Caco-2 (cell line): ENCODE measurements at regions of chr19 and their contacts with region 1.

Region 1: GRCh38 chr19:55258828-55259539 is at the start of gene PPP6R1:
- DNase-seq: peak; percentile 98 to 99
- H3K4me3 ChIP-seq: peak within 1 kb of the TSS; percentile 85
- H3K4me3 Mint-ChIP-seq: peak within 1 kb of the TSS; percentile 94
- H3K27ac Mint-ChIP-seq: peak within 1 kb of the TSS; percentile 81
- H3K4me1 ChIP-seq: peaks cover 23% of the 10 kb centered on the region; the same call in 1 of the 2 replicates
- H3K4me1 Mint-ChIP-seq: peaks cover 23% of the 10 kb centered on the region
- H3K27me3 ChIP-seq: no peaks in the 10 kb centered on the region
- H3K27me3 Mint-ChIP-seq: no peaks in the 10 kb centered on the region
- CTCF ChIP-seq: no peak
- total RNA-seq, gene PPP6R1: 113 and 118 TPM in 2 replicates

Region 2: DNA sequence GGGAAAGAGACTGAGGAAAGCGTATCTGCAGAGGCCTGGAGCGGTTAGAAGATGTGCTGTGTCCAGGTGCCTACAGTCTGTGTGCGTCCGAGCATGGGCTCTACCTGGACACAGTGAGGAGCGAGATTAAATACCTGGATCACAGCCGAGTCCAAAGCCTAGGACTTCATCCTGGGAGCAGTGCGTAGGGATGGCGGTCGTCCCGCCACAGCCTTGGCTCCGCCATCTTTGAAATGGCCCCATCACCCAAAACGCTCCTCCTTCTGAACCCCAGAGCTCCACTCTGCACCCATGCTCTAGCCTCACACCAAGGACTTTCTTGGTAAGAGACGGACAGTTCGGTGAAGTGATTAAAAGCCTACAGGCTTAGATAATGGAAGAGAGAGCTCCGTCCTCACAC is 240.8 kb before region 1 on chr19:
- CTCF ChIA-PET with region 1: no interaction called
- POLR2A ChIA-PET with region 1: no interaction called
- intact Hi-C with region 1: no loop called
- DNase-seq: no peak
- H3K4me3 ChIP-seq: no peak overlapping the region
- H3K4me3 Mint-ChIP-seq: no peak overlapping the region
- H3K27ac Mint-ChIP-seq: no peak overlapping the region
- H3K4me1 ChIP-seq: no peaks in the 10 kb centered on the region
- H3K4me1 Mint-ChIP-seq: no peaks in the 10 kb centered on the region
- H3K27me3 ChIP-seq: no peaks in the 10 kb centered on the region
- H3K27me3 Mint-ChIP-seq: no peaks in the 10 kb centered on the region
- CTCF ChIP-seq: no peak

Region 3: DNA sequence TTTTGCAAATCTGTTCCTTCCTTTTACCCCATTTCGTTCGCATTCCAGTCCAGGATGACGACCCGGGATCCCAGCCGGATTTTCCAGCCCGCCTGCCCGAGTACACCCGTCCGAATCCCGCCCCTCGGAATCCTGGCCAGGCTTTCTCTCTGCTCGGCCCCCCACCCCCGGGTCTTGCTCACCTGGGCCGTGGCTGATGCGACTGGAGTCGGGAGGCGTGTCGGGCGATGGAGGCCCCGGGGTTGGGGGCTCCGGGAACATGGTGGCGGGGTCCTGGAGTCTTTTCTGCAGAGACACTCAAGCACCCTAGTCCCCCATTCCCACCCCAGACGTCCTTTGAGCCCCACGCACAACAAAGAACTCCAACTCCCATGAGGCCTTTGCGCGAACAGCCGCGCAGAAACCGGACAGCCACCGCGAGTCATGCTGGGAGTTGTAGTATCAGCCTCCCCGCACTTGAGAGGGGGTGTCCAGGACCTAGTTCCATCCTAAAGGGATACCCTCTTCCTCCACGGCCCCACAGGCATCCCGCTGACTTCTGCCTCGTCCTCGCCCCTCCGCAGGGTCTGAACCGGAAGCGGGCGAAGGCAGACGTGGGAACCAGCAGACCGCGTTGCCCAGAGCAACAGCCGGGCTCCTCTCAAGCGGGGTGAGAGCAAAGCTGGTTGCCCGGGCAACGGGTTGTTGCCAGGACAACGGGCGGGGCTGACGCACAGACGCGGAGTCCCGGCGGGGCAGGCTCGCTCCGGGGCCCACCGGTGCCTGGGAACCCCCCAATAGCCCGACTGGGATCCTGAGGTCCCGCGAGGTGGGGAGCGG is 80.0 kb before region 1 on chr19:
- CTCF ChIA-PET with region 1: no interaction called
- POLR2A ChIA-PET with region 1: no interaction called
- intact Hi-C with region 1: no loop called
- DNase-seq: peak; percentile 77 to 78
- H3K4me3 ChIP-seq: peak overlapping the region; percentile 20
- H3K4me3 Mint-ChIP-seq: peak overlapping the region; percentile 74
- H3K27ac Mint-ChIP-seq: peak overlapping the region; percentile 40
- H3K4me1 ChIP-seq: peaks cover 17% of the 10 kb centered on the region; the same call in 1 of the 2 replicates
- H3K4me1 Mint-ChIP-seq: peaks cover 18% of the 10 kb centered on the region
- H3K27me3 ChIP-seq: no peaks in the 10 kb centered on the region
- H3K27me3 Mint-ChIP-seq: peaks cover 15% of the 10 kb centered on the region
- CTCF ChIP-seq: no peak

Region 4: GRCh38 chr19:55227241-55228014 is 31.6 kb before region 1 on chr19:
- CTCF ChIA-PET with region 1: interaction called, 5 read pairs
- POLR2A ChIA-PET with region 1: no interaction called
- intact Hi-C with region 1: loop called (anchors 1 kb)
- DNase-seq: no peak
- H3K4me3 ChIP-seq: peak overlapping the region; percentile 42
- H3K4me3 Mint-ChIP-seq: peak overlapping the region; percentile 60
- H3K27ac Mint-ChIP-seq: peak overlapping the region; percentile 98
- H3K4me1 ChIP-seq: peaks cover 32% of the 10 kb centered on the region
- H3K4me1 Mint-ChIP-seq: peaks cover 35% of the 10 kb centered on the region
- H3K27me3 ChIP-seq: no peaks in the 10 kb centered on the region
- H3K27me3 Mint-ChIP-seq: no peaks in the 10 kb centered on the region
- CTCF ChIP-seq: no peak

Region 5: DNA sequence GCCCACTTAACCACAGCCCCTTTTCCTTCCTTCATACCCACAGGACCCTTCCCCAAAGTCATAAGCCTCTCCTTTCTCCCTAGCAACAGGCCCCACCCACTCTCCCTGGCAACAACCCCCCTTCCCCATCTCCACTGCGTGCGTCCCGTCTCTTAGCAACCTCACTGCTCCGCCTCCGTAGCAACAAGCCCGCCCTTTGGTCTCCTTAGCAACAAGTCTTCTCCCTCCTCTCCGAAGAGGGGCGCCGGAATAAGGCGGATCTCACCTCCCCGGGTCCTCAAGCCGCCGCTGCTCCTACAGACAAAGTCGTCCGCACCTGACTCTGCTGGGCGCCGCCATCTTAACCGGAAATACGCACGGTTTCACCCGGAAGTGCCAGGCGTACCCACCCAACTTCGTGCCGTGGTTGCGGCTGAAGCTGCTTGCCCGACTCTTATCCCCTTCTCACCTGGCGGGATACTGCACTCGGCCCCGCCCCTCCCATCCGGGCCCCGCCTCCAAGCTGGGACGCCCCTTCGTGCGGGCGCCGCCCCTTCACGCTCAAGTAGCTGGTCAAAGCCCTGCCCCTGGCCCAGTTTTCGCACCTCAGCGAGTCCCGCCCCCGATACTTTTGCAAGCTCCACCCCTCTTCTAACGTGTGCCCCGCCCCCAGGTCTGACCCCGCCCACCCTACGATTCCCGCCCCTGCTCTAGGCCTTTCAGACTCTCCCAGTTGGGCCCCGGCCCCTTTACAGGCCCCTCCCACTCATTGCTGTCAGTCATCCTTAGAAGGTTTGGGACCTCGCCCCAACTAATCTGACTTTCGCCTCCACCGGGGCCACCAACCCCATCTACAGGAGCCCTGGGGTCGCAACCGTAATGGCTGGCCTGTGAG is 21.0 kb after region 1 on chr19 and contains the start of gene HSPBP1:
- CTCF ChIA-PET with region 1: interaction called, 7 read pairs
- POLR2A ChIA-PET with region 1: interaction called, 22 read pairs
- intact Hi-C with region 1: loop called (anchors 1 kb)
- DNase-seq: peak; percentile 99
- H3K4me3 ChIP-seq: peak within 1 kb of the TSS; percentile 50
- H3K4me3 Mint-ChIP-seq: peak within 1 kb of the TSS; percentile 100
- H3K27ac Mint-ChIP-seq: peak within 1 kb of the TSS; percentile 100
- H3K4me1 ChIP-seq: peaks cover 17% of the 10 kb centered on the region
- H3K4me1 Mint-ChIP-seq: peaks cover 19% of the 10 kb centered on the region
- H3K27me3 ChIP-seq: no peaks in the 10 kb centered on the region
- H3K27me3 Mint-ChIP-seq: no peaks in the 10 kb centered on the region
- CTCF ChIP-seq: no peak
- total RNA-seq, gene HSPBP1: 69.6 and 71.4 TPM in 2 replicates

Region 6: GRCh38 chr19:55289117-55289796 is 30.3 kb after region 1 on chr19:
- CTCF ChIA-PET with region 1: no interaction called
- POLR2A ChIA-PET with region 1: no interaction called
- intact Hi-C with region 1: loop called (anchors 1 kb)
- DNase-seq: no peak
- H3K4me3 ChIP-seq: no peak overlapping the region
- H3K4me3 Mint-ChIP-seq: no peak overlapping the region
- H3K27ac Mint-ChIP-seq: no peak overlapping the region
- H3K4me1 ChIP-seq: peaks cover 10% of the 10 kb centered on the region
- H3K4me1 Mint-ChIP-seq: peaks cover 8% of the 10 kb centered on the region
- H3K27me3 ChIP-seq: no peaks in the 10 kb centered on the region
- H3K27me3 Mint-ChIP-seq: no peaks in the 10 kb centered on the region
- CTCF ChIP-seq: no peak